Dorsolateral prefrontal cortex (tissue), 120 donors: ENCODE measurements at regions of chr5 and their contacts with region 1.

Region 1: DNA sequence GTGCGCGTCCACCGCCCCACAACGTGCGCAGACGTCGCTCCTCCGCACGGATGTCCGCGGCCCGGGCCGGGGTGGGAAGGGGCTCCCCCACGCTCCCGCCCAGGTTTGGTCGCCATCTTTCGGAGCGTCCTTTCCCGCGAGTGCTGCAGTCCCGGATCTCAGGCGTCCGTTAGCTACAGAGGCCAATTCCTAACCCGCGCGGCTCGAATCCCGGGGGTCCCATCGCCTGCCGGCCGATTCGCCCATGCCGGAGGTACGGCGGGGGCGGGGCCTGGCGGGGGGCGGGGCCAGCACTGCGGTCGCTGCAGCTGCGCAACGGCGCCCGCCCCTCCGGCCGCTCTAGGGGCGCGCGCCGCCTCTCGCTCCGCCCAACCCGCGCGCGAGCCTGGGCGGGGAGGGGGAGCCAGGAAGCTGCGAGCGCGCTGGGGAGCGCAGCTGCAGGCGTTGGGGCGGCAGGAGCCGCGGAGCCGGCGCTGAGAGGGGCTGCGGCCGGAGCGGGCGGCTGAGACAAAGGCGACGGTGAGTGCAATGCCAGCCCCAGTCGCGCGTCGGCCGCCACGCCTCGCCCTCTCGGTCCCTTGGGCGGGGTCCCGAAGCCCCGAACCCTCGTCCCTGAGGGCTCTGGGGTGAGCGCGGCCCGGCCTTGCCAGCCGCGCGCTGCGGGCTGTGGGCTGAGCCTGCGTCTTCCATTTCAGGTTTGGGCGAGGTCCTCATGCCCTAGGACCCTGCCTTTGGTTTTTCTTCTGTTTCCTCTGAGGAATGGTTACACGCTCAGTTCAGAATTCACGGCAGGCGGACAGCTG is at the start of gene CDC42SE2:
- DNase-seq: peak; percentile 68 to 92 (median 76)
- H3K4me3 ChIP-seq: peak within 1 kb of the TSS; percentile 73 to 99 (median 93)
- H3K27ac ChIP-seq: peak within 1 kb of the TSS; percentile 78 to 98 (median 94)
- H3K27me3 ChIP-seq: no peaks in the 10 kb centered on the region
- CTCF ChIP-seq: peak in 20 of 56 donors; percentile 5 to 57 (median 16)
- total RNA-seq, gene CDC42SE2: 34.8 to 102 (median 68.6) TPM

Region 2: DNA sequence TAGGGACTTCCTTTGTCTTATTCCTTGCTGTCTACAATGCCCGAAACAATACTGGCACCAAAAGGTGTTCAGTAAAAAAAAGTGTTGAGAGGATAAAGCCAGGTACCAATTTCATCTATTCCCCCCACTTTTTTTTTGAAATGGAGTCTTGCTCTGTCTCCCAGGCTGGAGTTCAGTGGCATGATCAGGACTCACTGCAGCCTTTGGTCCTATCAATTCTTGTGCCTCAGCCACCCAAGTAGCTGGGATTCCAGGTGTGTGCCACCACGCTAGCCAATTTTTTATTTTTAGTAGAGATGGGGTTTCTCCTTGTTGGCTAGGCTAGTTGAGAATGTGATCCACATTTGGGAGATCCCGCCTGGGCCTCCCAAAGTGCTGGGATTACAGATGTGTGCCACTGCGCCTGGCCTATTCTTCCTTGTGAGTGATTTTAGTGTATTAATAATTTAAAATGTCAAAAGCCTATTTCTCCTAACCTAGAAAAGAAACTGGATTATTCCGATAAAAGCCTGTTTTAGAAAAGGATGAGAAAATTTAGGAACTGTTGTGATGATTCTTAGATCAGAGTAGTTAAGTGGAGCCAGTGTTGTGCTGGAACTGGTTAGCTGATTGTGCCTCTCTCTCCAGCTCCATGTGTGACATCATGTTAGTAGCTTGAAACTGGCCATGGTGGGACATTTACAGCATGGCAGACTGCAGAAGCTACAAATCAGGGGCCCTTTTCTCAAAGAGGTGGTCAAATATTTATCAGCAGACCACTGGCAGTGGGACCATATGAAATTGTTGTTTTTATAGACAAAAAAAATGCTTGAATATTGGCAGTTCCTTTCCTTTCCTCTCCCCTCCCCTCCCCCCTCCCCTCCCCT is 14.3 kb after region 1 on chr5:
- intact Hi-C with region 1: loop called in 1 of 2 experiments (anchors 2 kb)
- DNase-seq: no peak
- H3K4me3 ChIP-seq: no peak overlapping the region
- H3K27ac ChIP-seq: peak overlapping the region in 54 of 59 donors; percentile 10 to 90 (median 66)
- H3K27me3 ChIP-seq: no peaks in the 10 kb centered on the region
- CTCF ChIP-seq: no peak

Region 3: DNA sequence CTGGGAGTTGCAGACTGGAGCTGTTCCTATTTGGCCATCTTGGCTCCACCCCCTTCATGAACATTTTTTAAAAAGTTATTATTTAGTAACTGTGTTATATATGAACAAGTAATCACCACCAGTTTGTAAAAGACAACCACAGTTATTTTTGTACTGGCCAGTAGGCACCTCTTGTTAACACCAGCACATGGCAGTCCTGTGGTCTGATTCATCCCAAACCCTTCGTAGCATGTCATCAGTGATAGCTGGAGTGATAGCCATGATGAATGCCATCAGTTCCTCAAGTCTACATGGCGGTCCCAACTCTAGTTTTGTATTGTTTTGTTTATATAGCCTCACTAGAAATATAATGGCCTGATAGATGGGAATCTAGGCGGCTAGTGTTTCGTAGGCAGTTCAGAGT is 74.2 kb after region 1 on chr5:
- intact Hi-C with region 1: no loop called
- DNase-seq: no peak
- H3K4me3 ChIP-seq: no peak overlapping the region
- H3K27ac ChIP-seq: no peak overlapping the region
- H3K27me3 ChIP-seq: no peaks in the 10 kb centered on the region
- CTCF ChIP-seq: no peak

Region 4: GRCh38 chr5:131382407-131383395 is 118.9 kb after region 1 on chr5:
- intact Hi-C with region 1: loop called in 1 of 2 experiments (anchors 5 kb)
- DNase-seq: no peak
- H3K4me3 ChIP-seq: peak overlapping the region in 1 of 59 donors; percentile 7
- H3K27ac ChIP-seq: peak overlapping the region in 58 of 59 donors; percentile 9 to 95 (median 75)
- H3K27me3 ChIP-seq: no peaks in the 10 kb centered on the region
- CTCF ChIP-seq: peak in 52 of 56 donors; percentile 15 to 64 (median 46)

Region 5: GRCh38 chr5:131417240-131417869 is 153.5 kb after region 1 on chr5:
- intact Hi-C with region 1: loop called (anchors 5 to 10 kb)
- DNase-seq: peak; percentile 59 to 86 (median 76)
- H3K4me3 ChIP-seq: peak overlapping the region in 4 of 59 donors; percentile 7 to 27 (median 26)
- H3K27ac ChIP-seq: peak overlapping the region in 41 of 59 donors; percentile 1 to 82 (median 48)
- H3K27me3 ChIP-seq: no peaks in the 10 kb centered on the region
- CTCF ChIP-seq: peak; percentile 78 to 99 (median 92)